HepG2 (cell line): ENCODE measurements at regions of chr2 and their contacts with region 1.

Region 1: DNA sequence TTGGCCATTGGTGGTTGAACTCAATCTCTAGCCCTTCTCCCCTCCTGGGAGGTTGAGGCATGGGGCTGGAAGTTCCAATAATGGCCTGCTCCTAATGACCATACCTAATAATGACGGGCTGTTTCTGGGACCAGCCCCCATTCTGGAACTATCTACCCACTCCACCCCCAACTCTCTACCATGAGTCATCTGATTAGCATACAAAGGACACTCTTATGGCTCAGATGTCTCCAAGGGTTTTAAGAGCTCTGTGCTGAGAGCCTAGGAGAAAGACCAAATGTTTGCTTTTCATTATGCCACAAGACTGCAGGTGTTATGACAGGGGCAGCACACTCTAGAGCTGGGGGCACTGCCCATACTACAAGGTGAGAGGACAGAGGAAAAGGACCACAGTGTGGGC is 137.0 kb upstream of the NCKAP5 start:
- DNase-seq: no peak
- ATAC-seq: no peak
- H3K4me3 ChIP-seq: no peak overlapping the region
- H3K27ac ChIP-seq: no peak overlapping the region
- H3K4me1 ChIP-seq: no peaks in the 10 kb centered on the region
- H3K27me3 ChIP-seq: no peaks in the 10 kb centered on the region
- CTCF ChIP-seq: no peak
- EP300 ChIP-seq: no peak
- POLR2A ChIP-seq: no peak
- RAD21 ChIP-seq: no peak

Region 2: GRCh38 chr2:133718688-133719201 is 13.5 kb after region 1 on chr2:
- CTCF ChIA-PET with region 1: no interaction called
- POLR2A ChIA-PET with region 1: no interaction called
- in situ Hi-C with region 1: no loop called
- intact Hi-C with region 1: loop called (anchors 1 kb)
- DNase-seq: no peak
- ATAC-seq: no peak
- H3K4me3 ChIP-seq: no peak overlapping the region
- H3K27ac ChIP-seq: no peak overlapping the region
- H3K4me1 ChIP-seq: no peaks in the 10 kb centered on the region
- H3K27me3 ChIP-seq: no peaks in the 10 kb centered on the region
- CTCF ChIP-seq: no peak
- EP300 ChIP-seq: no peak
- POLR2A ChIP-seq: no peak
- RAD21 ChIP-seq: no peak